ENCODE measurements at regions of chr5 and their contacts with region 1.

Region 1: GRCh38 chr5:78930721-78931120 is 54.4 kb downstream of the ARSB start:
- DNase-seq: no peak
- ATAC-seq: no peak
- H3K4me3 ChIP-seq: no peak overlapping the region
- H3K4me3 Mint-ChIP-seq: no peak overlapping the region
- H3K27ac ChIP-seq: no peak overlapping the region
- H3K27ac Mint-ChIP-seq: no peak overlapping the region
- H3K4me1 ChIP-seq: no peaks in the 10 kb centered on the region
- H3K4me1 Mint-ChIP-seq: no peaks in the 10 kb centered on the region
- H3K27me3 ChIP-seq: no peaks in the 10 kb centered on the region
- H3K27me3 Mint-ChIP-seq: no peaks in the 10 kb centered on the region
- CTCF ChIP-seq: no peak

Region 2: GRCh38 chr5:78959767-78960166 is 29.0 kb after region 1 on chr5:
- CTCF ChIA-PET with region 1: no interaction called
- POLR2A ChIA-PET with region 1: no interaction called
- intact Hi-C with region 1: loop called in 1 of 2 experiments (anchors 1 kb)
- DNase-seq: no peak
- ATAC-seq: no peak
- H3K4me3 ChIP-seq: no peak overlapping the region
- H3K4me3 Mint-ChIP-seq: no peak overlapping the region
- H3K27ac ChIP-seq: no peak overlapping the region
- H3K27ac Mint-ChIP-seq: no peak overlapping the region
- H3K4me1 ChIP-seq: no peaks in the 10 kb centered on the region
- H3K4me1 Mint-ChIP-seq: no peaks in the 10 kb centered on the region
- H3K27me3 ChIP-seq: no peaks in the 10 kb centered on the region
- H3K27me3 Mint-ChIP-seq: no peaks in the 10 kb centered on the region
- CTCF ChIP-seq: no peak

Measured in CD8-positive, alpha-beta T cell (primary cell).